ENCODE measurements at regions of chr16 and their contacts with region 1.

Region 1: GRCh38 chr16:51337662-51338061 is 186.6 kb upstream of the SALL1 start:
- DNase-seq: no peak
- ATAC-seq: peak in 1 of 4 donors; percentile 37
- H3K4me3 ChIP-seq: no peak overlapping the region
- H3K27ac ChIP-seq: no peak overlapping the region
- H3K4me1 ChIP-seq: no peaks in the 10 kb centered on the region
- H3K27me3 ChIP-seq: no peaks in the 10 kb centered on the region
- CTCF ChIP-seq: no peak
- POLR2A ChIP-seq: no peak

Region 2: GRCh38 chr16:51129105-51129504 is 208.6 kb before region 1 on chr16:
- intact Hi-C with region 1: no loop called
- DNase-seq: no peak
- ATAC-seq: peak in 3 of 4 donors; percentile 18 to 39 (median 34)
- H3K4me3 ChIP-seq: no peak overlapping the region
- H3K27ac ChIP-seq: no peak overlapping the region
- H3K4me1 ChIP-seq: peaks cover 0 to 43% (median 0%) of the 10 kb centered on the region in 4 donors
- H3K27me3 ChIP-seq: no peaks in the 10 kb centered on the region
- CTCF ChIP-seq: no peak
- POLR2A ChIP-seq: no peak

Region 3: GRCh38 chr16:51287121-51287755 is 50.4 kb before region 1 on chr16:
- intact Hi-C with region 1: no loop called
- DNase-seq: no peak
- ATAC-seq: no peak
- H3K4me3 ChIP-seq: no peak overlapping the region
- H3K27ac ChIP-seq: no peak overlapping the region
- H3K4me1 ChIP-seq: no peaks in the 10 kb centered on the region
- H3K27me3 ChIP-seq: no peaks in the 10 kb centered on the region
- CTCF ChIP-seq: no peak
- POLR2A ChIP-seq: no peak

Region 4: GRCh38 chr16:51392521-51393187 is 55.0 kb after region 1 on chr16:
- intact Hi-C with region 1: loop called in 1 of 2 experiments (anchors 10 kb)
- DNase-seq: no peak
- ATAC-seq: no peak
- H3K4me3 ChIP-seq: no peak overlapping the region
- H3K27ac ChIP-seq: no peak overlapping the region
- H3K4me1 ChIP-seq: no peaks in the 10 kb centered on the region
- H3K27me3 ChIP-seq: no peaks in the 10 kb centered on the region
- CTCF ChIP-seq: no peak
- POLR2A ChIP-seq: no peak

Region 5: GRCh38 chr16:51450909-51451308 is 113.2 kb after region 1 on chr16:
- intact Hi-C with region 1: no loop called
- DNase-seq: peak in 2 of 3 donors; percentile 60 to 75
- ATAC-seq: peak; percentile 96 to 98 (median 98)
- H3K4me3 ChIP-seq: no peak overlapping the region
- H3K27ac ChIP-seq: peak overlapping the region in 2 of 3 donors; percentile 61 to 64
- H3K4me1 ChIP-seq: peaks cover 0 to 14% (median 5%) of the 10 kb centered on the region in 4 donors
- H3K27me3 ChIP-seq: no peaks in the 10 kb centered on the region
- CTCF ChIP-seq: no peak
- POLR2A ChIP-seq: no peak

Measured in right lobe of liver (tissue), 6 donors.